GM12878 (cell line): ENCODE measurements at regions of chr6 and their contacts with region 1.

Region 1: DNA sequence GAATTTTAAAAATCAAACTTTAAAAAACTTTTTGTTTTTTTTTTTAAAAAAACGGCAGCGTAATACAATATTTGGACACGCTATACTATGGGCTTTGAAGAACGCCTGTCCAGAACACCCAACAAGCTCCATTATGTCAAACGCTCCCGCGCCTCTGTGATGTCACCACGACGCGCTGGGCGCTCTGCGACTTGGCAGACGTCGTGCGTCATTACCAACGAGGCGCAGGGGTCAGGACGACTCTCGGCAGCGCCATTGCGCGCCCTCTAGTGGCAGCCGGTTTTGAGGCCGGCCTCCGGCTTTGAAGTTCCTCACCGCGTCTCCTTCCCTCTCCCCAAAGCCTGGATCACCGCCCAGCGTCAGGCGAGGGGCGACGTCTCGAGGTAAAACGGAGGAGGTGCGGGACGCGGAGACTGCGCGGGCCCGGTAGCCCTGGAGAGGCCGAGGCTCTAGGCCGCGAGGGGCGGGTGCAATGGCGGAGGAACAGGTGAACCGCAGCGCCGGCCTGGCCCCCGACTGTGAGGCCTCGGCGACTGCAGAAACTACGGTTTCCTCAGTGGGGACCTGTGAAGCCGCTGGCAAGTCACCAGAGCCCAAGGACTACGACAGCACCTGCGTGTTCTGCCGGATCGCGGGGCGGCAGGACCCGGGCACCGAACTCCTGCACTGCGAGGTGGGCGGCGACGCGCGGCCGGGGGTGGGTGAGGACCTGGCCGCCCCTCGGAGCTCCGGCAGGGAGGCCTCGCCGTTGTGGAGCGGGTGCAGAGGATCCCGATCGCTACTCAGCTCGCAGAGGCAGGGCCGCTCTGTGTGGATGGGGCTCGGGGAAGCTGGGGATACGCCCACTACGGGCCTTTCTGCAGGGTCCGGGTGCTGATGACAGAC is at the start of gene HINT3:
- DNase-seq: peak; percentile 83
- ATAC-seq: peak; percentile 85
- H3K4me3 ChIP-seq: peak within 1 kb of the TSS; percentile 82
- H3K27ac ChIP-seq: peak within 1 kb of the TSS; percentile 88
- H3K4me1 ChIP-seq: peaks cover 7% of the 10 kb centered on the region
- H3K27me3 ChIP-seq: no peaks in the 10 kb centered on the region
- CTCF ChIP-seq: peak; percentile 97 to 99 (median 98)
- EP300 ChIP-seq: 0 out of 4 replicates have a peak, but pooled peaks of 1 of the 2 experiments have one; percentile 27
- POLR2A ChIP-seq: peak; percentile 82
- RAD21 ChIP-seq: peak; percentile 76
- polyA plus RNA-seq, gene HINT3: 0.72 to 1.4 TPM

Region 2: GRCh38 chr6:125790358-125791150 is 166.2 kb before region 1 on chr6 and contains the start of gene NCOA7:
- CTCF ChIA-PET with region 1: interaction called, 505 read pairs
- POLR2A ChIA-PET with region 1: interaction called, 17 read pairs
- RAD21 ChIA-PET with region 1: interaction called, 91 read pairs
- SMC1A ChIA-PET with region 1: interaction called, 179 read pairs
- in situ Hi-C with region 1: loop called (anchors 5 kb)
- intact Hi-C with region 1: loop called (anchors 2 kb)
- DNase-seq: no peak
- ATAC-seq: peak; percentile 83
- H3K4me3 ChIP-seq: peak within 1 kb of the TSS; percentile 91
- H3K27ac ChIP-seq: peak within 1 kb of the TSS; percentile 91
- H3K4me1 ChIP-seq: peaks cover 24% of the 10 kb centered on the region
- H3K27me3 ChIP-seq: no peaks in the 10 kb centered on the region
- CTCF ChIP-seq: no peak
- EP300 ChIP-seq: no peak
- POLR2A ChIP-seq: peak; percentile 85
- RAD21 ChIP-seq: no peak
- polyA plus RNA-seq, gene NCOA7: 18.9 to 28.8 TPM

Region 3: GRCh38 chr6:125858427-125859320 is 98.1 kb before region 1 on chr6:
- CTCF ChIA-PET with region 1: interaction called, 26 read pairs
- POLR2A ChIA-PET with region 1: no interaction called
- RAD21 ChIA-PET with region 1: interaction called, 11 read pairs
- SMC1A ChIA-PET with region 1: interaction called, 6 read pairs
- in situ Hi-C with region 1: no loop called
- intact Hi-C with region 1: loop called (anchors 2 kb)
- DNase-seq: no peak
- ATAC-seq: peak; percentile 91
- H3K4me3 ChIP-seq: no peak overlapping the region
- H3K27ac ChIP-seq: no peak overlapping the region
- H3K4me1 ChIP-seq: no peaks in the 10 kb centered on the region
- H3K27me3 ChIP-seq: no peaks in the 10 kb centered on the region
- CTCF ChIP-seq: peak; percentile 60 to 64 (median 62); a peak in 5 of 6 replicates
- EP300 ChIP-seq: no peak
- POLR2A ChIP-seq: no peak
- RAD21 ChIP-seq: peak; percentile 63

Region 4: GRCh38 chr6:125906158-125906998 is 50.4 kb before region 1 on chr6:
- CTCF ChIA-PET with region 1: interaction called, 46 read pairs
- POLR2A ChIA-PET with region 1: no interaction called
- RAD21 ChIA-PET with region 1: interaction called, 27 read pairs
- SMC1A ChIA-PET with region 1: interaction called, 16 read pairs
- in situ Hi-C with region 1: no loop called
- intact Hi-C with region 1: loop called (anchors 1 kb)
- DNase-seq: no peak
- ATAC-seq: peak; percentile 55
- H3K4me3 ChIP-seq: no peak overlapping the region
- H3K27ac ChIP-seq: no peak overlapping the region
- H3K4me1 ChIP-seq: peaks cover 16% of the 10 kb centered on the region
- H3K27me3 ChIP-seq: no peaks in the 10 kb centered on the region
- CTCF ChIP-seq: peak; percentile 63 to 94 (median 91)
- EP300 ChIP-seq: no peak
- POLR2A ChIP-seq: no peak
- RAD21 ChIP-seq: peak; percentile 58

Region 5: DNA sequence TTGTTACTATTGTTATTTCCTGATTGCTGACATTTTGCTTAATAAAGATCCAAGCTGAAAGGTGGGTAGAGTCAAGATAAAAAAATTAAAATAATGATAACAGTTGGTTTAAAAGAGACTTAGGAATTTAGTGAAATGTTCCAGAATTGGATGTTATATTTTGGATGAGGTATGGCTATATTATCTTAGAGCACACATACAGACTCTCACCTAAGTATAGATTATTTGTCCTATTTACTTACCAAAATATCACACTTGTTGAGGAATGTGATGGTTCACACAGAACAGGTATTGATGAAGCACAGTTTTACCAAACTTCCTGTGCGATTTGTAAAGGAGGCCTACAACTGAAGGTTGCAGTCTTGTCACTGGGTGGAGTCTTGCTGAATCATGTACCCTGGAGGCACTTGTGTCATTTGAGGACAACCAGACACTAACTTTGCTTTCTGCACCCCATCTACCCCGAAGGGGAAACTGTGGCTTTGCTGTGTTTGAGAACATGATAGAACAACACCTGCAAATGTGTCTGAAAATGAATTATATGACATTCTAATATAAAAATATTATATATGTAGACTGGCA is 32.7 kb before region 1 on chr6:
- CTCF ChIA-PET with region 1: interaction called, 39 read pairs
- POLR2A ChIA-PET with region 1: interaction called, 11 read pairs
- RAD21 ChIA-PET with region 1: interaction called, 13 read pairs
- SMC1A ChIA-PET with region 1: interaction called, 35 read pairs
- in situ Hi-C with region 1: no loop called
- intact Hi-C with region 1: no loop called
- DNase-seq: no peak
- ATAC-seq: peak; percentile 50
- H3K4me3 ChIP-seq: no peak overlapping the region
- H3K27ac ChIP-seq: 0 out of 2 replicates have a peak overlapping the region, but pooled peaks have one; percentile 19
- H3K4me1 ChIP-seq: peaks cover 3% of the 10 kb centered on the region; the same call in 1 of the 2 replicates
- H3K27me3 ChIP-seq: no peaks in the 10 kb centered on the region
- CTCF ChIP-seq: no peak
- EP300 ChIP-seq: no peak
- POLR2A ChIP-seq: no peak
- RAD21 ChIP-seq: no peak

Region 6: GRCh38 chr6:125974214-125974866 is 17.6 kb after region 1 on chr6:
- CTCF ChIA-PET with region 1: interaction called, 183 read pairs
- POLR2A ChIA-PET with region 1: interaction called, 5 read pairs
- RAD21 ChIA-PET with region 1: interaction called, 26 read pairs
- SMC1A ChIA-PET with region 1: interaction called, 27 read pairs
- in situ Hi-C with region 1: no loop called
- intact Hi-C with region 1: no loop called
- DNase-seq: no peak
- ATAC-seq: peak; percentile 93
- H3K4me3 ChIP-seq: no peak overlapping the region
- H3K27ac ChIP-seq: no peak overlapping the region
- H3K4me1 ChIP-seq: no peaks in the 10 kb centered on the region
- H3K27me3 ChIP-seq: no peaks in the 10 kb centered on the region
- CTCF ChIP-seq: peak; percentile 21 to 57 (median 49); a peak in 3 of 6 replicates
- EP300 ChIP-seq: no peak
- POLR2A ChIP-seq: no peak
- RAD21 ChIP-seq: peak; percentile 48

Region 7: DNA sequence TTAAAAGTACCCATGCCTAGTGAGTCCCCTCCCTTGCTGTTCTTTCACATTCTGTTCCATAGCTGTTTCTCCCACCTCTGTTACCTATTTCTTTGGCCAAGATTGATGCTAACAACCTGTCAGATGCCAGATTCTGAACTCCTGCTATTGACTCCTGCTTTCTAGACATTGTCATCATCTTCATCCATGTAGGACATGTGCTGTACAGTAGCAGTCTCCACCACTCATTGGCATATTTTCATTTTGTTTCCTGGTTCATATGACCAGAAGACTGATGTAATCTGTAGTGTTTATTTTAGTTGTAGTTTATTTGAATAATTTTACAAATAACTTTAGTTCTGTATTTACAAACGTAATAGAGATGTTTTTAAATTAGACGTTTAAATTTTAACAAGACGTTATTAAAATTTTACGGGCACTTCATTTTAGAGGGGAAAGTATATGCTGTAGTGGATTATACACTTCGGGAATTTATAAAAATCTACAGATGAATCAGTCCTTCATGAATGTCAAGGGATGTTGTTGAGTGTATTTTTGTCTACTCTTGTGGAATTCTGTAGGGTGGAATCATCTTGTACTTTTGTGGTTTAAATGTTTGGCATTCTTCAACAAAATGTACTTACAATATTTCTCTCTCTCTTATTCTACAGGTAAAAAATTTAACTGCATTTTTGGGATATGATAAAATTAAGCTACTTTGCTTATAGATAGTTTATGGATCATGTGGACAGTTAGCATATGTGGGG is 63.7 kb after region 1 on chr6:
- CTCF ChIA-PET with region 1: no interaction called
- POLR2A ChIA-PET with region 1: no interaction called
- RAD21 ChIA-PET with region 1: no interaction called
- SMC1A ChIA-PET with region 1: no interaction called
- in situ Hi-C with region 1: no loop called
- intact Hi-C with region 1: no loop called
- DNase-seq: no peak
- ATAC-seq: no peak
- H3K4me3 ChIP-seq: no peak overlapping the region
- H3K27ac ChIP-seq: no peak overlapping the region
- H3K4me1 ChIP-seq: no peaks in the 10 kb centered on the region
- H3K27me3 ChIP-seq: no peaks in the 10 kb centered on the region
- CTCF ChIP-seq: no peak
- EP300 ChIP-seq: no peak
- POLR2A ChIP-seq: no peak
- RAD21 ChIP-seq: no peak